ENCODE measurements at regions of chr11 and their contacts with region 1.

Region 1: GRCh38 chr11:124673333-124674167 is at the starts of genes SIAE and SPA17:
- DNase-seq: peak; percentile 97
- H3K4me3 ChIP-seq: peak within 1 kb of the TSS; percentile 89
- H3K27ac ChIP-seq: peak within 1 kb of the TSS; percentile 69
- H3K4me1 ChIP-seq: peaks cover 18% of the 10 kb centered on the region
- H3K27me3 ChIP-seq: no peaks in the 10 kb centered on the region
- total RNA-seq, gene SIAE: 19.5 and 22.6 TPM in 2 replicates
- total RNA-seq, gene SPA17: 4.9 and 6.5 TPM in 2 replicates

Region 2: GRCh38 chr11:124763156-124763947 is 89.8 kb after region 1 on chr11:
- in situ Hi-C with region 1: loop called (anchors 10 kb)
- DNase-seq: peak; percentile 71
- H3K4me3 ChIP-seq: peak overlapping the region; percentile 68
- H3K27ac ChIP-seq: no peak overlapping the region
- H3K4me1 ChIP-seq: peaks cover 7% of the 10 kb centered on the region; the same call in 1 of the 2 replicates
- H3K27me3 ChIP-seq: peaks cover 37% of the 10 kb centered on the region

Region 3: DNA sequence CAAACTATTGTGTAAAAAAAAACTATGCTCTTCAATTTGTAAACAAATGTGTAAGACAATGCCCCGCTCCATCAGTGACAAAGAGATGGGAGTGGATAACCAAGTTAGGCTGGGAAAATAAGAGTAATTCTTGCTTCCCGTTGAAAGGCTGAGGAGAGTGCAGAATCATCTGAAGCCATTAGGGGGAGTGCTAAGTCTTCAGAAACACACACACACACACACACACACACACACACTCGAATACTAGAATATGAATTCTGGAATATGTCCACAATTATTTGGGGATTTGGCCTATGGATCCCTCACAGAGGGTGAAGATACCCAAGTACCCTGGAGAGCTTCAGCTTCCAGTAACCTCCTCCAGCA is 163.9 kb after region 1 on chr11:
- in situ Hi-C with region 1: loop called (anchors 10 kb)
- DNase-seq: peak; percentile 91
- H3K4me3 ChIP-seq: no peak overlapping the region
- H3K27ac ChIP-seq: peak overlapping the region; percentile 1; the same call in 1 of the 2 replicates
- H3K4me1 ChIP-seq: 0 out of 2 replicates have a peak, but pooled peaks cover 3% of the 10 kb centered on the region
- H3K27me3 ChIP-seq: peaks cover 39% of the 10 kb centered on the region

Measured in GM23248 (cell line).